H1 (cell line): ENCODE measurements at regions of chr1 and their contacts with region 1.

Region 1: GRCh38 chr1:36516372-36517325 is 33.9 kb upstream of the CSF3R start:
- DNase-seq: peak; percentile 31 to 82
- H3K4me3 ChIP-seq: no peak overlapping the region
- H3K27ac ChIP-seq: no peak overlapping the region
- H3K4me1 ChIP-seq: peaks cover 0 to 4% (median 0%) of the 10 kb centered on the region in 4 experiments; a peak in 2 of 7 replicates
- H3K27me3 ChIP-seq: no peaks in the 10 kb centered on the region
- CTCF ChIP-seq: peak; percentile 86 to 95 (median 95)
- EP300 ChIP-seq: no peak
- POLR2A ChIP-seq: no peak
- RAD21 ChIP-seq: peak; percentile 94 to 98

Region 2: DNA sequence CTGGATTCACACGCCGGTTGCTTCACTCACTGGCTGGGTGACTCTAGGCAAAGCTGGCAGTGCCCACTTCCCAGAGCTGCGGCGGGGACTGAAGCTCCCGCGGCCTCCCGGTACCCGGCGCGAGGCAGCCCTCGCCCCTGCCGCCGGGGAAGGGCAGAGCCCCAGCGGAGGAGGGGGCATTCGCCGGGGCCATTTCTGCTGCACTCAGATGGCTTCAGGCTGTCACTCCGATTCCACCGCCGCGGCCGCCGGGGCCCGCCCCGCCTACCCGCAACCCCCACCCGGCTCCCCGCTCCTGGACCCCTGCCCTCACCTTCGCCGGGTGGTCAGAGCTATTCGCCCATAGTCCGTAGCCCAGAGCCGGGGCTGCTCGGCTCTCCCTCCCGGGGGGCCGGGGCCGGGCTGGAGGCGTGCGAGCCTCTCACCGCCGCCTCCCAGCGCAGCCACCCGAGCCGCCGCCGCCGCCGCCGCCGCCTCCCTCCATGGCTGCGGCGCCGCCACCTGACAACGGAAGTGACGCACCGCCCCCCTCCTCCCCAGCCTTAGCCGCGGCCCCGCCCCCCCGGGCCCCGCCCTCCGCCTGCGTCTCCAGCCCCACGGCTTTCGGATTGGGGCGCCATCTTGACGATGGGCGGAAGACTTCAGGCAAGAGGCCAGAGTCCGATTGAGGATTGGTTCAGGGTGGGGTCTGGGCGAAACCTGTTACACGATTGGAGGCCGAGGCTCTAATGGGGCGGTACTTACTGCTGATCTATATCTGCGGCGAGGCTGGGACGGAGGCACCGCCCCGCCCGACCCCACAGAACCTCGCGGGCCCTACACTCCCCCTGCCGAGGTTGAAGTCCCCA is 131.0 kb before region 1 on chr1 and contains the start of gene STK40:
- CTCF ChIA-PET with region 1: no interaction called
- POLR2A ChIA-PET with region 1: no interaction called
- DNase-seq: peak; percentile 91 to 98
- H3K4me3 ChIP-seq: peak within 1 kb of the TSS; percentile 71 to 94 (median 92)
- H3K27ac ChIP-seq: peak within 1 kb of the TSS; percentile 94
- H3K4me1 ChIP-seq: peaks cover 6 to 17% (median 10%) of the 10 kb centered on the region in 4 experiments; a peak in 6 of 7 replicates
- H3K27me3 ChIP-seq: no peaks in the 10 kb centered on the region
- CTCF ChIP-seq: no peak
- EP300 ChIP-seq: no peak
- POLR2A ChIP-seq: no peak
- RAD21 ChIP-seq: no peak
- total RNA-seq, gene STK40: 25.3 and 28.6 TPM in 2 replicates

Region 3: DNA sequence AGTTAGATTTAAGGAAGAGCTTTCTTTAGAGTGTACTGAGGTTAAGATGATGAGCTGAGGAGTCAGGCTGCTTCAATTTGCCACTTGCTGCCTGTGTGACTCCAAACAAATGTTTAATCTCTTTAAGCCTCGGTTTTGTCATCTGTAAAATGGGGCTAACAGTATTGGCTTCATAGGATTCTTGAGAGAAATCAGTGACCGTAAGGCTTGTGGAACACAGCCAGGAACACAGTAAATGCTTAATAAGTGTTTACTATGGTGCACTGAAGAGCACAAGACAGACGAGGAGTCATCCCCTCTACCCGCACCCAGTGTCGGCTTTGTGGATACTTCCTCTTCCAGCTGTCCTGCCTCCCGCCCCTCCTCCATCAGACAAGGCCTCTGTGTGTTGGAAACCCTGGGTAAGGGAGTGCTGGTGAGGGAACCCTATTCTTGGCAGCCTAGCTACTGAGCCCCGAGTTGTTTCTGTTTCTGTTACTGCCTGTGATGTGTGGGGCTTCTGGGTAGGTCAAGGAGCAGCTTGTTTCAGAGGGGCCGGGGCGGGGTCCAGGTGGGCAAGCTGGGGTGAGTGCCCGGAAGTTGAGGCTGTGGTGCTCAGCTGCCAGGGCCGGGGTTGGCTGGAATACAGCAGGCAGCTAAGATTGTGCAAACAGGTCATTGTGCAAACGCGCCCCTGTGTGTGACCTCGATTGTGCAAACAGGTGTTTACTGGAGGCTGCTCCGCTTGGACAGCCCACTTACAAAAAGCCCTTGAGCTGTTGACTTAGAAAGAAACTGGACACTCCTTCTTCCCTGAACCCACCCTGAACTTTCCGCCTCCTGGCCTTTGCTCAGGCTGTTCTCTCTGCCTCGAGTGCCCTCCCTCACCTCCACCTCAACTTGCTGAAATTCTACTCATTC is 30.0 kb before region 1 on chr1:
- CTCF ChIA-PET with region 1: interaction called, 15 read pairs
- POLR2A ChIA-PET with region 1: no interaction called
- DNase-seq: no peak
- H3K4me3 ChIP-seq: no peak overlapping the region
- H3K27ac ChIP-seq: no peak overlapping the region
- H3K4me1 ChIP-seq: peaks cover 0 to 2% (median 0%) of the 10 kb centered on the region in 4 experiments; a peak in 3 of 7 replicates
- H3K27me3 ChIP-seq: no peaks in the 10 kb centered on the region
- CTCF ChIP-seq: no peak
- EP300 ChIP-seq: no peak
- POLR2A ChIP-seq: no peak
- RAD21 ChIP-seq: no peak

Region 4: DNA sequence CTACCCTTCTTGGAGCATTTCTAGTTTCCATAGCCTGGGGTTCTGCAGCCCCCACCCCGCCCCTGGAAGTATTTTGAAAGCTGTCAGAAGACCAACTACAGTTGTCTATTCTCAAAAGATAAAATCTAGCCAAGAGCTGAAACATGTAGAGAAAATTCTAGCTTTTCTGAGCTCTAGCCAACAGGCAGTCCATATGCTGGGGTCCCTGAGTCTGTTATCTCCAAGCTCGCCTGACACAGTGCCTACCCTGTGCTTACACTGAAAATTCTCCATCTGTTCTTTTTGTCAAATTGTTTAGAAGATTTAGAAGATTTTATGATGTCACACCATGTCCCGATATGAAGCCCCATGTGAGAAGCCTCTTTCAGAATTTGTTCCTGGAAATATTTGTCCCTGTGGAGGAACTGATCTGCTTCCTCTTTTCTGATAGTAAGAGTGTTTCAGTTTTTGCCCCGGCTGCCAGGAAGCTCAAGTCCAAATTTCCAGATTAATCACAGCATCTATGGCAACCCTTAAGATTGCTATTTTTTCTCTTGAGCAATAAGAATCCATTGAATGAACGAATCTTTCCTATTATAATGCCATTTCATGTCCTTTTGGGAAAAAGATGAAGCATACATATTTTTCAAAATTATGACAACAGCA is 10.3 kb before region 1 on chr1:
- CTCF ChIA-PET with region 1: interaction called, 34 read pairs
- POLR2A ChIA-PET with region 1: no interaction called
- DNase-seq: no peak
- H3K4me3 ChIP-seq: no peak overlapping the region
- H3K27ac ChIP-seq: no peak overlapping the region
- H3K4me1 ChIP-seq: no peaks in the 10 kb centered on the region; a peak in 1 of 7 replicates
- H3K27me3 ChIP-seq: no peaks in the 10 kb centered on the region
- CTCF ChIP-seq: no peak
- EP300 ChIP-seq: no peak
- POLR2A ChIP-seq: no peak
- RAD21 ChIP-seq: no peak

Region 5: DNA sequence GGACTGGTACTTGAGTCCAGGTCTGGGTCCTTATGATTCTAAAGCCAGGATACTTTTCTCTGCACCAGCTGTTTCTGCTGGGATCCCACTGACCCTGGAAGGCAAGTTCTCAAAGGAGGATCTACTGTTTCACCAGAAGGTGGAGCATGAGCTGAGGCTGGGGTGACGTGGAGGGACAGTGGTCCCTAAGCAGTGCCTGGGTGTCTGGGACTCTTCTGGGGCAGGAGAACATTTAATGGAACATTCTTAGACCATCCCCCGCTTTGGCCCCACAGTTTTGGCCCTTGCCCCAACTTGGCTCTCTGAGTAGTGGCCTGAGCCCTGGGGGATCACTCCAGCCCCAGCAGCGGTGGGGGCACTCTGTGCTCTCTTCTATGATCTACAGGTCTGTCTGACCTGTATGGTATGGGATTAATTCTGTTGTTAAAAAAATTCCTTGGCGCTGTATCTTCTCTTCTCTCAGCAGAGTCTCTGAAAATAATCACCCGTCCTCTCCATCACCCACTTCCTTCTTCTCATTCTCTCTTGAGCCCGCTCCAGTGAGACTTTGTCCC is 26.4 kb after region 1 on chr1:
- CTCF ChIA-PET with region 1: interaction called, 62 read pairs
- POLR2A ChIA-PET with region 1: no interaction called
- DNase-seq: no peak
- H3K4me3 ChIP-seq: no peak overlapping the region
- H3K27ac ChIP-seq: no peak overlapping the region
- H3K4me1 ChIP-seq: no peaks in the 10 kb centered on the region; a peak in 1 of 7 replicates
- H3K27me3 ChIP-seq: no peaks in the 10 kb centered on the region
- CTCF ChIP-seq: peak; percentile 21 to 76 (median 68)
- EP300 ChIP-seq: no peak
- POLR2A ChIP-seq: no peak
- RAD21 ChIP-seq: peak; percentile 21 to 45; a peak in 2 of 4 replicates

Region 6: DNA sequence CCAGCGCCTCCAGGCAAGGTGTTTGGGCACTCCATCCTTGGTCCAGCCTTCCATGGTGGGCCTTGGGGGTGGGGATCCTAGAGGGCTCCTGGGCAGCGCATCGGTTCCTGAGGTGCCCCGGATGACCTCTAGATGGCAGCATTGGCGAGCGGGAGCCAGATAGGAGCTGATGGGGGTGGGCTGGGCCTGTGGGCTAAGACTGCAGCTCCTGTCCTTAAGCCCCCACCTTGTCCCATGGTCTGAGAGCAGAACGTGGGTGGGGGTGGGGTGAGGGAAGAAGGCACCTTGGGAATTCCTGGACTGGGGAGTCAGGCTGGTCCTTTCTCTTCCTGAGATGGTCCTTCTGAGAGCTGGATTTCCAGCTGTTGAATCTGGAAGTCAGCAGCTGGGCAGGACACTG is 59.5 kb after region 1 on chr1:
- CTCF ChIA-PET with region 1: interaction called, 28 read pairs
- POLR2A ChIA-PET with region 1: no interaction called
- DNase-seq: peak; percentile 49 to 93
- H3K4me3 ChIP-seq: peak overlapping the region in 1 of 4 experiments; percentile 10; a peak in 1 of 8 replicates
- H3K27ac ChIP-seq: no peak overlapping the region
- H3K4me1 ChIP-seq: peaks cover 0 to 21% (median 10%) of the 10 kb centered on the region in 4 experiments; a peak in 6 of 7 replicates
- H3K27me3 ChIP-seq: no peaks in the 10 kb centered on the region; a peak in 1 of 7 replicates
- CTCF ChIP-seq: peak; percentile 85 to 93 (median 90)
- EP300 ChIP-seq: no peak
- POLR2A ChIP-seq: no peak
- RAD21 ChIP-seq: peak; percentile 94 to 97

Region 7: DNA sequence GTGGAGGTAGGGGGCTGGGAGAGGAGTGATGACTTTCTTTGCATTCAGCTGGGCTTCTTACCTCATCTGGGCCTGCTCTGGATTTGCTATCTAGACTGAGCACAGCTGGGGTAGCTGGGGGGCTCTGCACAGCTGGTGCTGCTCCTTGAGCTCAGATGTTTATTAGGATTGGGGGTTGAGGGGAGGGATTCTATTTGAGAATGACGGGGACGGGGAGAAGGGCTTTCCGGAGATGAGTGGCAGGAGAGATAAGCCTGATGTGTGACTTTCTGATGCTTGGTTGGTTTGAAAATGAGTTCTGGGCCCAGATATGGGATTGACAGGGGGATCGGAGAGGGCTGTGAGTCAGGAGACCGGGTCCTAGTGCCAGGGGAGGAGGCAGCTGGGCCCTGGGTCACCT is 112.2 kb after region 1 on chr1:
- CTCF ChIA-PET with region 1: interaction called, 15 read pairs
- POLR2A ChIA-PET with region 1: no interaction called
- DNase-seq: no peak
- H3K4me3 ChIP-seq: no peak overlapping the region
- H3K27ac ChIP-seq: no peak overlapping the region
- H3K4me1 ChIP-seq: peaks cover 0 to 7% (median 6%) of the 10 kb centered on the region in 4 experiments; a peak in 6 of 7 replicates
- H3K27me3 ChIP-seq: 0 out of 7 replicates have a peak, but pooled peaks cover 0 to 2% (median 0%) of the 10 kb centered on the region in 4 experiments
- CTCF ChIP-seq: no peak
- EP300 ChIP-seq: no peak
- POLR2A ChIP-seq: no peak
- RAD21 ChIP-seq: no peak

Region 8: GRCh38 chr1:37123266-37124115 is 606.8 kb after region 1 on chr1:
- CTCF ChIA-PET with region 1: interaction called, 10 read pairs
- POLR2A ChIA-PET with region 1: no interaction called
- DNase-seq: no peak
- H3K4me3 ChIP-seq: no peak overlapping the region
- H3K27ac ChIP-seq: no peak overlapping the region
- H3K4me1 ChIP-seq: no peaks in the 10 kb centered on the region
- H3K27me3 ChIP-seq: no peaks in the 10 kb centered on the region; a peak in 1 of 7 replicates
- CTCF ChIP-seq: no peak
- EP300 ChIP-seq: no peak
- POLR2A ChIP-seq: no peak
- RAD21 ChIP-seq: no peak